ENCODE measurements at regions of chr19 and their contacts with region 1.

Region 1: GRCh38 chr19:2475702-2476450 is at the start of gene GADD45B:
- DNase-seq: peak; percentile 94
- ATAC-seq: peak; percentile 54
- H3K4me3 ChIP-seq: peak within 1 kb of the TSS; percentile 100
- H3K27ac ChIP-seq: peak within 1 kb of the TSS; percentile 95
- H3K4me1 ChIP-seq: peaks cover 12% of the 10 kb centered on the region
- H3K27me3 ChIP-seq: no peaks in the 10 kb centered on the region
- CTCF ChIP-seq: no peak
- EP300 ChIP-seq: peak in 1 of 2 experiments; percentile 17; a peak in 1 of 4 replicates
- POLR2A ChIP-seq: peak; percentile 100
- RAD21 ChIP-seq: no peak; the same call in 1 of the 2 replicates
- polyA plus RNA-seq, gene GADD45B: 2.4 to 10.5 TPM

Region 2: DNA sequence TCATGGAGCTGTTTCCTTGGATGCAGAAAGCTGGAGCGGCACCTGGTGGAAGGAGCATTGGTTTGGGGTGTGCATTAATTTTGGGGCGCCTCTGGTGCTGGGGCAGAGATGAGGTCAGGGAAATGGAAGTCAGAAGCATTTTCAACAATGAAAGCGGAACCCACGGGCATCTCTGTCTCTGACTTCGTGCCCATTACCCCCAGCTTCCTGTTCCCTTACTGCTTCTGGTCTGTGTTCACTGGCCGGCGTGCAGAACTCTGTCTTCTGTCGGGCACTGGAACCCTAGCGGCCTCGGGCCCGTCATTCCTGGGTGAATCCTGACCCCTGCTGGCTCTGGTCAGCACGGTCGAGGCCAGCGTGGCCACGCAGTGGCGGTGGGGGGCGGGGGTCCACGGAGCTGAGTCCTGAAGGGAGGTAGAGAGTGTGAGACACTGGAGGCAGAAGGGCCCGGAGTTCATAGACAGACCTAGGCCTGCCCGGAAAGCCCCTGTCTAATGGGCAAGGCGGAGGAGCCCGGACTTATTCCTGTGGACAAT is 160.0 kb before region 1 on chr19:
- CTCF ChIA-PET with region 1: no interaction called
- POLR2A ChIA-PET with region 1: interaction called, 11 read pairs
- RAD21 ChIA-PET with region 1: no interaction called
- SMC1A ChIA-PET with region 1: no interaction called
- in situ Hi-C with region 1: no loop called
- intact Hi-C with region 1: no loop called
- DNase-seq: no peak
- ATAC-seq: peak; percentile 90
- H3K4me3 ChIP-seq: no peak overlapping the region
- H3K27ac ChIP-seq: no peak overlapping the region
- H3K4me1 ChIP-seq: peaks cover 3% of the 10 kb centered on the region; the same call in 1 of the 2 replicates
- H3K27me3 ChIP-seq: no peaks in the 10 kb centered on the region
- CTCF ChIP-seq: peak; percentile 43 to 61 (median 53); a peak in 4 of 6 replicates
- EP300 ChIP-seq: no peak
- POLR2A ChIP-seq: no peak
- RAD21 ChIP-seq: peak; percentile 74

Region 3: GRCh38 chr19:2552859-2553258 is 77.0 kb after region 1 on chr19:
- CTCF ChIA-PET with region 1: interaction called, 7 read pairs
- POLR2A ChIA-PET with region 1: interaction called, 24 read pairs
- RAD21 ChIA-PET with region 1: interaction called, 7 read pairs
- SMC1A ChIA-PET with region 1: interaction called, 29 read pairs
- in situ Hi-C with region 1: no loop called
- intact Hi-C with region 1: loop called (anchors 2 kb)
- DNase-seq: peak; percentile 86
- ATAC-seq: peak; percentile 94
- H3K4me3 ChIP-seq: peak overlapping the region; percentile 20; the same call in 1 of the 2 replicates
- H3K27ac ChIP-seq: peak overlapping the region; percentile 55
- H3K4me1 ChIP-seq: peaks cover 11% of the 10 kb centered on the region
- H3K27me3 ChIP-seq: no peaks in the 10 kb centered on the region
- CTCF ChIP-seq: no peak
- EP300 ChIP-seq: peak in 1 of 2 experiments; percentile 77; a peak in 1 of 4 replicates
- POLR2A ChIP-seq: no peak
- RAD21 ChIP-seq: 0 out of 2 replicates have a peak, but pooled peaks have one; percentile 5

Region 4: GRCh38 chr19:2578901-2579677 is 103.2 kb after region 1 on chr19:
- CTCF ChIA-PET with region 1: interaction called, 45 read pairs
- POLR2A ChIA-PET with region 1: interaction called, 12 read pairs
- RAD21 ChIA-PET with region 1: interaction called, 51 read pairs
- SMC1A ChIA-PET with region 1: interaction called, 47 read pairs
- in situ Hi-C with region 1: no loop called
- intact Hi-C with region 1: loop called (anchors 1 kb)
- DNase-seq: no peak
- ATAC-seq: peak; percentile 90
- H3K4me3 ChIP-seq: no peak overlapping the region
- H3K27ac ChIP-seq: no peak overlapping the region
- H3K4me1 ChIP-seq: peaks cover 7% of the 10 kb centered on the region; the same call in 1 of the 2 replicates
- H3K27me3 ChIP-seq: no peaks in the 10 kb centered on the region
- CTCF ChIP-seq: peak; percentile 43 to 79 (median 72); a peak in 5 of 6 replicates
- EP300 ChIP-seq: no peak
- POLR2A ChIP-seq: no peak
- RAD21 ChIP-seq: peak; percentile 78

Region 5: GRCh38 chr19:2602391-2603181 is 126.7 kb after region 1 on chr19:
- CTCF ChIA-PET with region 1: interaction called, 113 read pairs
- POLR2A ChIA-PET with region 1: interaction called, 166 read pairs
- RAD21 ChIA-PET with region 1: interaction called, 221 read pairs
- SMC1A ChIA-PET with region 1: interaction called, 143 read pairs
- in situ Hi-C with region 1: no loop called
- intact Hi-C with region 1: no loop called
- DNase-seq: no peak
- ATAC-seq: no peak
- H3K4me3 ChIP-seq: no peak overlapping the region
- H3K27ac ChIP-seq: no peak overlapping the region
- H3K4me1 ChIP-seq: peaks cover 13% of the 10 kb centered on the region; the same call in 1 of the 2 replicates
- H3K27me3 ChIP-seq: no peaks in the 10 kb centered on the region
- CTCF ChIP-seq: no peak
- EP300 ChIP-seq: no peak
- POLR2A ChIP-seq: no peak
- RAD21 ChIP-seq: no peak

Region 6: DNA sequence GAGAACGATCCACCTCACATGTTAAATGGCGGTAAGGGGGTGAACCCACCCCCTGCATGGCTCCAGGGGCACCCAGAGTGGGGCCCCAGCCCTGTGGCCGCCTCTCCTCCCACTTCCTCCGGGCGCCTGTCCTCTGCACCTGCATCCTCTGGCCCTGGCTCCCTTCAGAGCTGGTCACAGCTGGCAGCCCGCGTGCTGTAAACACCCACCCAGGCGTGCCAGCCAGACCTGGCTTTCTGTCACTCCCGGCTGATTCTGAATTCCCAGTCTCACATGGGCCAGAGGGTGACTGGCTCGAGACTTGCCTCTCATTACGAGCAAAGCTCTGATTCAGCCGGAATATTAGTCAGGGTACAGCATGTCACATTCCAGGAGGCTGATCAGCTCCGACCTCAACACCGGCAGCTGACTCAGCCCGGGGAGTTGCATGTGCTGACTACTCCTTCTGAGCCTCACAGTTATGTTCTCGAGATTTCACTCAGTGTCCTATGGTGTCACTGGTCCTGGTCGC is 151.5 kb after region 1 on chr19:
- CTCF ChIA-PET with region 1: interaction called, 13 read pairs
- POLR2A ChIA-PET with region 1: interaction called, 38 read pairs
- RAD21 ChIA-PET with region 1: interaction called, 26 read pairs
- SMC1A ChIA-PET with region 1: interaction called, 46 read pairs
- in situ Hi-C with region 1: no loop called
- intact Hi-C with region 1: no loop called
- DNase-seq: no peak
- ATAC-seq: peak; percentile 52
- H3K4me3 ChIP-seq: no peak overlapping the region
- H3K27ac ChIP-seq: peak overlapping the region; percentile 45
- H3K4me1 ChIP-seq: peaks cover 55% of the 10 kb centered on the region
- H3K27me3 ChIP-seq: no peaks in the 10 kb centered on the region
- CTCF ChIP-seq: no peak
- EP300 ChIP-seq: no peak
- POLR2A ChIP-seq: peak; percentile 54; the same call in 1 of the 2 replicates
- RAD21 ChIP-seq: no peak

Measured in GM12878 (cell line).